Naive thymus-derived CD4-positive, alpha-beta T cell (primary cell): ENCODE measurements at regions of chr20 and their contacts with region 1.

Region 1: DNA sequence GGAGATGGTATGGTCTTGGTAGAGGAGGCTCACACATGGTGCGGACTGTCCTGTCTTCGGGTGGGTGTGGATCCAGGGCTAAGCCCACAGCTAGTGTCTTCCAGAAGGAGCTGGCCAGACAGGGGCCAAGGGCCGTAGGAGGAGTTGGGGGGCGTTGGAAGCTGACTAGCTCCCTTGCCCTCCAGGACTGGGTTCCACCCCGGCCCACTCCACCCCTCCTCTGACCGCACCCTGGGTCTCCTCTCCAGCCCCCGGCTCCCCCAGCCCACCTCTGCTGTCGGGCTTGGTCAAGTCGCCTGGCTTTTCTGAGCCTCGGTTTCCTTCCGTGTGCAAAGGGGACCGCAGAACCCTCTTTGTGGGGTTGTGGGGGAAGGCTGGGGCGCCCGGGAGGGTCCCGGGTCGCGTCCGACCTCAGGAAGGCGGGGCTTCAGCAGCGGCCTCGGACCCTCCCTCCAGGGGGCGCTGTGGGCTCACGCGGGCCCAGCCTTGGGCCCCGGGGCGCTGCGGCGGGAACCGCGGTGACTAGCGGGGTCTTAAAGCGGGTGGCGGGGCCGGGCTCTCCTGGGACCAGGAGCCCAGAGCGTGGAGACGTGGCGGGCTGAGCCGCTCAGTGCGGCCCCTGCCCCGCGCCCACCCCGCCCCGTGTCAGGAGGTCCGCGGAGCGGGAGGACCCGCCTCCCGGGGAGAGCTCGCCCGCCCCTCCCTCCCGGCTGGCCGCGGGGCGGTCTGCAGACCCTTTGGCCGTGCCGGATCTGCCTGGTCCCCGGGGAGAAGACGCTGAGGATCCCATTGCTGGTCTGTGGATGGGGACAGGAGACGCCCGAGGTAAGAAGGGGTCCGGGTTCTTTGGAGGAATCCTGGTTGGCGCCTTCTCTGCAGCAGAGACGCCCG is 5.4 kb downstream of the NPBWR2 start:
- DNase-seq: peak in 8 of 9 donors; percentile 44 to 84 (median 66)
- ATAC-seq: peak; percentile 87
- H3K4me3 ChIP-seq: peak overlapping the region; percentile 24
- H3K4me3 Mint-ChIP-seq: peak overlapping the region in 9 of 10 donors; percentile 2 to 73 (median 48)
- H3K27ac ChIP-seq: no peak overlapping the region
- H3K27ac Mint-ChIP-seq: no peak overlapping the region
- H3K4me1 ChIP-seq: peaks cover 10 to 13% of the 10 kb centered on the region in 2 donors
- H3K4me1 Mint-ChIP-seq: peaks cover 7 to 22% (median 10%) of the 10 kb centered on the region in 7 donors
- H3K27me3 ChIP-seq: peaks cover 0 to 4% of the 10 kb centered on the region in 2 donors
- H3K27me3 Mint-ChIP-seq: peaks cover 4 to 23% (median 10%) of the 10 kb centered on the region in 5 donors

Region 2: DNA sequence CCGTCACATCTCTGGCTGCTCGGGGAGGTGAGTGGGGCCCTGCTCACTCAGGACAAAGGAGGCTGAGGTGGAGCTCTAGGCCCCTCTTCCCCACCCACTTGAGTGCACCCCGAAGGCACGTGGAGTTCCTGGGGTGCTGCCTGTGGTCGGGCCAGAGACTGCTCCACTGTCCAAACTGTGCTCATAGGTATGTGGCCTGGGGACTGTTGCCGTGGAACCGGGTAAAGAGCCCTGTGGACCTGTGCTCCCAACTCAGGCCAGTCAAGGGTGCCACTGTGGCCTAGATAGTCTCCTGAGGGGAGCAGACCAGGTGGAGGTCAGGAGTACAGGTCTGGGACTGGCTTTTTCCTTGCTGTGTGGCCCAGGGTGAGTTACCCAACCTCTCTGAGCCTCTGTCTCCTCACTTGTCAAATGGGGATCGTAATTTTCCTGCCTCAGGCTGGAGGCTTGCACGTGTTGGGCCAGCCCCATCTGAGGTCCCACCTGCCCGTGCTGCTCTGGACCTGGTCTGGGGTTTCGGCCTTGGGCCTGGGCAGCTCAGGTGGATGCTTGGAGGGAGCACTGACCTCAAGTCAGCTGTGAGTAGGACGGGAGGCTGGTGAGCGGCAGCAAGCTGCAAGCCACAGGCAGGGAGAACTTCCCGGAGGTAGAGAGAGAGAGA is 17.8 kb after region 1 on chr20:
- CTCF ChIA-PET with region 1: no interaction called
- POLR2A ChIA-PET with region 1: no interaction called
- intact Hi-C with region 1: loop called in 1 of 2 experiments (anchors 1 kb)
- DNase-seq: peak in 3 of 9 donors; percentile 2 to 24 (median 14)
- ATAC-seq: peak; percentile 18
- H3K4me3 ChIP-seq: peak overlapping the region; percentile 36
- H3K4me3 Mint-ChIP-seq: peak overlapping the region; percentile 39 to 80 (median 73)
- H3K27ac ChIP-seq: peak overlapping the region; percentile 22
- H3K27ac Mint-ChIP-seq: peak overlapping the region; percentile 69 to 85 (median 78)
- H3K4me1 ChIP-seq: peaks cover 5 to 9% of the 10 kb centered on the region in 2 donors
- H3K4me1 Mint-ChIP-seq: peaks cover 0 to 10% (median 8%) of the 10 kb centered on the region in 7 donors
- H3K27me3 ChIP-seq: no peaks in the 10 kb centered on the region
- H3K27me3 Mint-ChIP-seq: peaks cover 0 to 28% (median 0%) of the 10 kb centered on the region in 5 donors

Region 3: GRCh38 chr20:64145458-64145857 is 43.5 kb after region 1 on chr20:
- CTCF ChIA-PET with region 1: no interaction called
- POLR2A ChIA-PET with region 1: no interaction called
- intact Hi-C with region 1: no loop called
- DNase-seq: no peak
- ATAC-seq: no peak
- H3K4me3 ChIP-seq: no peak overlapping the region
- H3K4me3 Mint-ChIP-seq: no peak overlapping the region
- H3K27ac ChIP-seq: no peak overlapping the region
- H3K27ac Mint-ChIP-seq: no peak overlapping the region
- H3K4me1 ChIP-seq: no peaks in the 10 kb centered on the region
- H3K4me1 Mint-ChIP-seq: peaks cover 0 to 3% (median 0%) of the 10 kb centered on the region in 7 donors
- H3K27me3 ChIP-seq: no peaks in the 10 kb centered on the region
- H3K27me3 Mint-ChIP-seq: peaks cover 0 to 9% (median 0%) of the 10 kb centered on the region in 5 donors